Posterior vena cava (tissue), 2 donors: ENCODE measurements at regions of chr2 and their contacts with region 1.

Region 1: DNA sequence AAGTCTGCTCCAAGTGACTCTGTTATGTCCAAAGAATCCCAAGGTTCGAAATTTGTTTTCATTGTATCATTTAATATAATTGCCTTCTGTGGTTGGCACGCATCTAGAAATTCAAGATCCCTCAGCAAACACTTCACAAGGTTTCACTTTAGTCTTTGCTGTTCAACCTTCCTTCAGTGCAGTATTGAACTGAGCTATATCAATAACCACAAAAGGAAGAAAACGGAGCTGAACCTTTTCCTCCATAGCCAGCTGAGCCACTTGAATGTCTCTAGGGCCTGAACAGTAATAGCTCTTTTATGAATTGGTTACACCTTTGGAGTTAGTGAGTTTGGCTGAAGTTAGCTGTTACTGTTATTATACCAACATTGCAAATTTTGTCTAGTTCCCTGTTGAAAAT is 357.7 kb upstream of the HNRNPA3 start:
- DNase-seq: no peak

Region 2: DNA sequence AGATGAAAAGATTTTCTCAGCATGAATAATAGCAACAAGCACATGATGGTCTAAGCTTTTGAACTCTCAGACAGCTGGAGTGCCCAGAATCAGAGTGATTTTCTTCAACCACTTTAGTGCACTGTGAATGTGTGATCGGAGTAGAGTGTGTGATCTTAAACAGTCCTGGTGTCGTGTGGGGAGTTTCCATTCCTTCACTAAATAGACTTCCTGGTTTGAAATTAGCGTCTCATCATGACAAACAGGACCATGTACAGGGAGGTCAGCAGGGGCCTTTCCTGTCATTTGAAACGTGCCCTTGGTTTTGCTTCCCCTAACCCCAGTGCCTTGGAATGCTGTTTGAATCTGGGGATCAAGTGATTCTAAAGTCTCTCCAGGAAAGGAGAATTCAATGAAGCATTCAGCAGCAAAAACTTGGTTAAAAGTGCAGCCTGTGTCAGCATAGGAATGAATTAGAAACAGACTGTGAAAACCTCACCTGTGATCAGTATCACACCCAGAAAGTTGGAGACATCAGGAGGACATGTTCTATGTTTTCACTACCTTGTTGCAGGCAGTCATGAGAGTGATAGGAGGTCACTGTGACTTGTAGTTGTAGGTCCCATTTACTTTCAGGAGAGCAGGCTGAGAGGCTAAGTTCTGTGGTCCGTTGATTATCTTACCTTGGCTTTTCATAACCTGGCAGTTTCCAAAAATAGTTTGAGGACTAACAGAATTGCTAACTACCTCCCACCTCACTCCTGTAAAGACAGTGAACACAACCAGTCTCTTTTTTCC is 185.3 kb before region 1 on chr2:
- intact Hi-C with region 1: no loop called
- DNase-seq: no peak

Region 3: GRCh38 chr2:177429688-177430325 is 574.9 kb after region 1 on chr2:
- intact Hi-C with region 1: loop called in 1 of 2 experiments (anchors 5 kb)
- DNase-seq: no peak